ENCODE measurements at regions of chr14 and their contacts with region 1.

Region 1: GRCh38 chr14:80575763-80576162 is 364.5 kb upstream of the DIO2 start:
- DNase-seq: no peak
- H3K4me3 Mint-ChIP-seq: no peak overlapping the region
- H3K27ac Mint-ChIP-seq: no peak overlapping the region
- H3K4me1 Mint-ChIP-seq: no peaks in the 10 kb centered on the region
- H3K27me3 Mint-ChIP-seq: no peaks in the 10 kb centered on the region

Region 2: DNA sequence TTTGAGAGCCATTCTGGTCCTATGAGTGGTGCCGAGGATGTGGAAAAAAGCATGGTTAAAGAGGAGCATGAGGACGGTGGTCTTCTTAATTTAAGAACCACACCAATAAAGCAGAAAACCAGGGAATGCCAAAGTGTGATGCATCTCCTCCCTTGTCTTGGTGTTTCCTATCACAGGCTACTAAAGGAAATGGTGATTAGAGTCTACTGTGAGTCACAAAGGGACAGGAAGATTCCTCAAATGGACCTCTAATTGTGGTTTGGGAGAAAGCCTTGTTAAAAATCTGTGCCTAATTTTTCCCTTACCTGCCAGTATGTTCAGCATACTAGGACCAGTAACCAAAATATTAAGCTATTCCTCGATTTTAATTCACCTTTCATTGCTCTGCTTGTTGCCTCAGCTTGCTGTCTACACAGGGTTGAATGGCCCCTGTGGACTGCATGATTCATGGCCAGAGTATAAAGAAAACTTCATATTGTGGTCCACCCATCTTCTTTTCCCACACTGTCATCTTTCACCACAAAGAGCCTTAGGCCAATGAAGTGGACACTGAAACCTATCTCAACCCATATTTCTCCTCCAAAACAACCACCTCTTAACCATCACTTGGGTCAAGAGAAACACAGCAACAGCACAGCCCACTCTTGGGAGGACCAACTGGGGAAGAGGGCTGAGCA is 403.2 kb before region 1 on chr14:
- CTCF ChIA-PET with region 1: no interaction called
- POLR2A ChIA-PET with region 1: no interaction called
- intact Hi-C with region 1: no loop called
- DNase-seq: no peak
- H3K4me3 Mint-ChIP-seq: no peak overlapping the region
- H3K27ac Mint-ChIP-seq: no peak overlapping the region
- H3K4me1 Mint-ChIP-seq: no peaks in the 10 kb centered on the region
- H3K27me3 Mint-ChIP-seq: no peaks in the 10 kb centered on the region

Region 3: GRCh38 chr14:80587075-80587724 is 11.4 kb after region 1 on chr14:
- CTCF ChIA-PET with region 1: interaction called, 6 read pairs
- POLR2A ChIA-PET with region 1: no interaction called
- intact Hi-C with region 1: loop called (anchors 1 kb)
- DNase-seq: no peak
- H3K4me3 Mint-ChIP-seq: no peak overlapping the region
- H3K27ac Mint-ChIP-seq: peak overlapping the region; percentile 67
- H3K4me1 Mint-ChIP-seq: peaks cover 17% of the 10 kb centered on the region
- H3K27me3 Mint-ChIP-seq: no peaks in the 10 kb centered on the region

Region 4: GRCh38 chr14:80658733-80659132 is 83.0 kb after region 1 on chr14:
- CTCF ChIA-PET with region 1: no interaction called
- POLR2A ChIA-PET with region 1: no interaction called
- intact Hi-C with region 1: no loop called
- DNase-seq: no peak
- H3K4me3 Mint-ChIP-seq: no peak overlapping the region
- H3K27ac Mint-ChIP-seq: no peak overlapping the region
- H3K4me1 Mint-ChIP-seq: no peaks in the 10 kb centered on the region
- H3K27me3 Mint-ChIP-seq: no peaks in the 10 kb centered on the region

Measured in activated CD4-positive, alpha-beta memory T cell treated with anti-CD3 and anti-CD28 coated beads for 36 hours (primary cell).